CD14-positive monocyte (primary cell): ENCODE measurements at regions of chr10 and their contacts with region 1.

Region 1: DNA sequence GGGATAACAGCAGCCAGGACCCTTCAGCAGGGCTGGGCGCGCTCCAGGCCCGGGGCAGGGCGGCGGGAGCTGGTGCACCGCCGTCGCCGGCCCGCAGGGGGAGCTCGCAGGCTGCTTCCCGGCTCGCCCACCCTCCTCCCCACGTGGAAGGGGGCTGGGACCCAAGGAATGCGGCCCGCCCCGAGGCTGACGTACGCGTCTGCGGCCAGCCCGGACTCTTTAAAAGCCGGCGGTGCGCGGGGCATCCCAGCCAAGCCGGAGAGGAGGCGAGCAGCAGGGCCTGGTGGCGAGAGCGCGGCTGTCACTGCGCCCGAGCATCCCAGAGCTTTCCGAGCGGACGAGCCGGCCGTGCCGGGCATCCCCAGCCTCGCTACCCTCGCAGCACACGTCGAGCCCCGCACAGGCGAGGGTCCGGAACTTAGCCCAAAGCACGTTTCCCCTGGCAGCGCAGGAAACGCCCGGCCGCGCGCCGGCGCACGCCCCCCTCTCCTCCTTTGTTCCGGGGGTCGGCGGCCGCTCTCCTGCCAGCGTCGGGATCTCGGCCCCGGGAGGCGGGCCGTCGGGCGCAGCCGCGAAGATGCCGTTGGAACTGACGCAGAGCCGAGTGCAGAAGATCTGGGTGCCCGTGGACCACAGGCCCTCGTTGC is at the start of gene PFKFB3:
- DNase-seq: peak; percentile 92 to 96 (median 94)
- H3K4me3 ChIP-seq: peak within 1 kb of the TSS; percentile 82 to 97 (median 93)
- H3K4me3 Mint-ChIP-seq: peak within 1 kb of the TSS; percentile 99
- H3K27ac ChIP-seq: peak within 1 kb of the TSS; percentile 31 to 85
- H3K27ac Mint-ChIP-seq: peak within 1 kb of the TSS; percentile 79 to 92 (median 85)
- H3K4me1 ChIP-seq: peaks cover 52 to 60% of the 10 kb centered on the region in 2 donors
- H3K4me1 Mint-ChIP-seq: peaks cover 55% of the 10 kb centered on the region
- H3K27me3 ChIP-seq: peaks cover 0 to 9% of the 10 kb centered on the region in 2 donors
- H3K27me3 Mint-ChIP-seq: peaks cover 8 to 25% (median 24%) of the 10 kb centered on the region in 3 donors
- CTCF ChIP-seq: peak; percentile 97
- polyA plus RNA-seq, gene PFKFB3: 12.2 to 101 (median 15.8) TPM

Region 2: DNA sequence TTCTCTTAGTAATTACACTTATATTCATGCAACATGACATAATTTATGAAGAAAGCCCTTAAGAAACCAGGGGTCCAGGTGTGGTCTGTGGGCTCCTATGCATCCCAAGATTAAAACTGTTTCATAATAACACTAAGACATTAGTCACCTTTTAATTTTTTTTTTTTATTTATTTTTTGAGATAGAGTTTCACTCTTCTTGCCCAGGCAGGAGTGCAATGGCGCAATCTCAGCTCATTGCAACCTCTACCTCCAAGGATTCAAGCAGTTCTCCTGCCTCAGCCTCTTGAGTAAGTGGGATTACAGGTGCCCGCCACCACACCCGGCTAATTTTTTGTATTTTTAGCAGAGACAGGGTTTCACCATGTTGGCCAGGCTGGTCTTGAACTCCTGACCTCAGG is 402.0 kb before region 1 on chr10:
- intact Hi-C with region 1: no loop called
- DNase-seq: no peak
- H3K4me3 ChIP-seq: no peak overlapping the region
- H3K4me3 Mint-ChIP-seq: no peak overlapping the region
- H3K27ac ChIP-seq: peak overlapping the region in 1 of 2 donors; percentile 45
- H3K27ac Mint-ChIP-seq: peak overlapping the region in 1 of 7 donors; percentile 78
- H3K4me1 ChIP-seq: peaks cover 3 to 6% of the 10 kb centered on the region in 2 donors
- H3K4me1 Mint-ChIP-seq: peaks cover 20% of the 10 kb centered on the region
- H3K27me3 ChIP-seq: no peaks in the 10 kb centered on the region
- H3K27me3 Mint-ChIP-seq: peaks cover 0 to 2% (median 0%) of the 10 kb centered on the region in 3 donors
- CTCF ChIP-seq: no peak

Region 3: GRCh38 chr10:6089391-6090219 is 113.2 kb before region 1 on chr10:
- intact Hi-C with region 1: loop called in 1 of 2 experiments (anchors 5 kb)
- DNase-seq: peak in 1 of 3 donors; percentile 29
- H3K4me3 ChIP-seq: peak overlapping the region; percentile 58 to 97 (median 69)
- H3K4me3 Mint-ChIP-seq: peak overlapping the region; percentile 96 to 98
- H3K27ac ChIP-seq: peak overlapping the region; percentile 27 to 80
- H3K27ac Mint-ChIP-seq: peak overlapping the region; percentile 81 to 96 (median 89)
- H3K4me1 ChIP-seq: peaks cover 54 to 58% of the 10 kb centered on the region in 2 donors
- H3K4me1 Mint-ChIP-seq: peaks cover 56% of the 10 kb centered on the region
- H3K27me3 ChIP-seq: no peaks in the 10 kb centered on the region
- H3K27me3 Mint-ChIP-seq: peaks cover 0 to 6% (median 3%) of the 10 kb centered on the region in 3 donors
- CTCF ChIP-seq: no peak

Region 4: DNA sequence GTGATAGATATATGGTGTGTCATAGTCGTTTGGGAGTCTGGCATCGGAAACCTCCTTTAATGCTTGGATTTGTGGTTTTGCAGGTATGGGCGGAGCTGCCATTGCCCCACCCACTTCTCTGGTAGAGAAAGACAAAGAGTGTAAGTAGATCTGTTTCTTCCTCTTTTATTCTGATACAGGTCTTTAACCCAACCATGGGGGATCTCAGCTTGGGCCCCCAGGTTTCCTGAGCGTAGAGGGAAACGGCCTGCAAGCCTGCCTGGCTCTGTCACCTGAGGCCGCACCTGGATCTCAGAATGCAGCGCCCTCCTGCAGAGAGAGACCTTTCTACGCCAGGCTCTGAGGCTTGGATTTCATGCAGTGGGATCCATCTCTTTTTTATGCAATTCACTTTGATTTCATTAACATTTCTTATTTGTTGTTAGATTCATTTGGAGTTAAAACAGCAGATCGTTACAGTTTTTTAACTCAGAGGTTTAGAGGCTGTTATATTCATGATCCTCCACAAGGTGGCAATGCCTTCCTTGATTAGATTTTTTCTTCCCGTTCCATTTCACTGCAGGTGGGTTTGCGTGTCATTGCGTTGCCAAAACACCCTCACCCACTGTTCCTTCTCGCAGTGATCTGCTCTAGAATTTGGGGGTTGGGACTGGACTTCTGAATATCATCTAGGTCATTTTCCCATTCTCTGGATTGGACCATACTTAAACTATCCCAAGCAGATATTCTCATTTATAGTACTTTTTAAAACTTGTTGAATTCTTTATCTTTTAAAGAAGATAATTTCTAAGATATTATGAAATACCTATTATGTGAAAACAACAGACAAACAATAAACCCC is 94.0 kb before region 1 on chr10:
- intact Hi-C with region 1: loop called (anchors 2 to 5 kb)
- DNase-seq: peak; percentile 33 to 72 (median 68)
- H3K4me3 ChIP-seq: no peak overlapping the region
- H3K4me3 Mint-ChIP-seq: no peak overlapping the region
- H3K27ac ChIP-seq: no peak overlapping the region
- H3K27ac Mint-ChIP-seq: peak overlapping the region in 3 of 7 donors; percentile 3 to 64 (median 51)
- H3K4me1 ChIP-seq: peaks cover 0 to 4% of the 10 kb centered on the region in 2 donors
- H3K4me1 Mint-ChIP-seq: peaks cover 5% of the 10 kb centered on the region
- H3K27me3 ChIP-seq: no peaks in the 10 kb centered on the region
- H3K27me3 Mint-ChIP-seq: no peaks in the 10 kb centered on the region
- CTCF ChIP-seq: peak; percentile 89

Region 5: GRCh38 chr10:6163364-6164270 is 39.2 kb before region 1 on chr10:
- intact Hi-C with region 1: loop called (anchors 5 kb)
- DNase-seq: peak; percentile 85 to 88 (median 88)
- H3K4me3 ChIP-seq: peak overlapping the region; percentile 67 to 76 (median 69)
- H3K4me3 Mint-ChIP-seq: peak overlapping the region; percentile 95 to 99
- H3K27ac ChIP-seq: peak overlapping the region; percentile 85 to 92
- H3K27ac Mint-ChIP-seq: peak overlapping the region; percentile 93 to 99 (median 99)
- H3K4me1 ChIP-seq: peaks cover 19 to 26% of the 10 kb centered on the region in 2 donors
- H3K4me1 Mint-ChIP-seq: peaks cover 37% of the 10 kb centered on the region
- H3K27me3 ChIP-seq: no peaks in the 10 kb centered on the region
- H3K27me3 Mint-ChIP-seq: no peaks in the 10 kb centered on the region
- CTCF ChIP-seq: no peak

Region 6: DNA sequence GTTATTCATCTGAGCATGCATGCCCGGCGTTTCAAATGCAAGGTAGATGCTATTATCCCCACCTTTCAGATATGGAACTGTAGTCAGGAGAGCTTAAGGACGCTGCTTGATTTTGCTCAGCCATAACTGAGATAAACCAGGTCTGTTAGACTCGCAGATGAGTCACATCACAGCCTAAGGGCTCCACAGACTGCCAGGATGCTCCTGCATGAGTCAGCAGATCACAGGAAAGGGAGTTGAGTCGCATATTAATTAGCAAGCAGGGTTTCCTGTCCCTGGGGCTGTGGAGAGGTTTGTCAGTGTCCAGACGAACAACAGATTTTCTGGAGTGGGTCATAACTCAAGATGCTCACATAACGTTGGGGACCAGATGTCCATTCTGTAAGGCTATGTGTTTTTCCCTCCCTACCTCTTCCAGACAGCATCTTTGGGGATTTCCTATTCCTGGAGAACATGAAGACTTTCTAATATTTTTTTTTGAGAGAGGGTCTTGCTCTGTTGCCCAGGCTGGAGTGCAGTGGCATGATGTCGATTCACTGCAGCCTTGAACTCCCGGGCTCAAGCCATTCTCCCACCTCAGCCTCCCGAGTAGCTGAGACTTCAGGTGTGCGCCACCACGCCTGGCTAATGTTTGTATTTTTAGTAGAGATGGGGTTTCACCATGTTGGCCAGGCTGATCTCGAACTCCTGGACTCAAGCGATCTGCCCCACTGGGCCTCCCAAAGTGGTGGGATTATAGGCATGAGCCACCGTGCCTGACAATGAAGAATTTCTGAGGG is 36.6 kb after region 1 on chr10:
- intact Hi-C with region 1: no loop called
- DNase-seq: peak; percentile 91 to 97 (median 92)
- H3K4me3 ChIP-seq: no peak overlapping the region
- H3K4me3 Mint-ChIP-seq: peak overlapping the region in 1 of 2 donors; percentile 28
- H3K27ac ChIP-seq: peak overlapping the region in 1 of 2 donors; percentile 62
- H3K27ac Mint-ChIP-seq: peak overlapping the region; percentile 25 to 88 (median 82)
- H3K4me1 ChIP-seq: peaks cover 17 to 25% of the 10 kb centered on the region in 2 donors
- H3K4me1 Mint-ChIP-seq: peaks cover 24% of the 10 kb centered on the region
- H3K27me3 ChIP-seq: no peaks in the 10 kb centered on the region
- H3K27me3 Mint-ChIP-seq: peaks cover 0 to 2% (median 1%) of the 10 kb centered on the region in 3 donors
- CTCF ChIP-seq: no peak

Region 7: DNA sequence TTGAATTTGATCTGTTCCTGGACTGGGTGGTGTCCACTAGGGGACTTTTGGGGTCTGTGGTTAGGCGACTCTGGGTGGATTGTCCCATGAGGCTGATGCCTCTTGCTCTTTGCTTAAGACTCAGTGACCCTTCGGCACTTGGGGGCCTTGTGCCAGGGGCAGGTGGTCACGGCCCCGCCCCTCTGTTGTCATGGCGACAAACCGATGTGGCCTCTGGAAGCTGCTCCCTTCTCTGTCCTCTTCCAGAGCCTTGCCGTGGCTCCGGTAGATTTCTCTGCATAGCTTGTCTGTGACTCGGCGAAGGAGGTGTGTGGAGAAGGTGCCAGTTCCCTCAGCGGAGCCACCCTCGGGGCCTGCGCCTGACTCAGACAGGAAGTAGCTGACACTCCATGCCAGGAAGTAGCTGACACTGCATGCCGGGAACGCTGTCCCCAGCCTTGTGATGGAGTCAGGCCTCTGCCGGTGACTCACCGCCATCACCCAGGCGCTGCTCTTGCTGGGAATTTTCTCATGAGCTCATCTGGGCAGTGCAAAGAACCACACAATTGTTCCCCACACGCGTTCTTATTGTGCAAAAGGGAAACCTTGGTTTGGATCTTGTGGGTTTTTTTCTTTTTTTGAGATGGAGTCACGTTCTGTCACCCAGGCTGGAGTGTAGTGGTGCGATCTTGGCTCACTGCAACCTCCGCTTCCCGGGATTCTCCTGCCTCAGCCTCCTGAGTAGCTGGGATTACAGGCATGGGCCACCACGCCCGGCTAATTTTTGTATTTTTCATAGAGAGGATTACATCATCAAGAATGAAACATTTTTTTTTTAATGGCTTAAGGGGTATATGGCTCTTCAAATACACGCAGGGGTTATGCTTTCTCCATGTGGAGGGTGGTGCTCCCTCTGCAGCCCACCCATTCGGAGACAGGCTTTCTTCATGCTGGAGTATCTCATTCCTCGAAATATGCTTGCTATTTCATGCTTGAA is 72.5 kb after region 1 on chr10:
- intact Hi-C with region 1: no loop called
- DNase-seq: peak; percentile 100
- H3K4me3 ChIP-seq: peak overlapping the region in 2 of 3 experiments; percentile 15 to 24
- H3K4me3 Mint-ChIP-seq: peak overlapping the region; percentile 67 to 83
- H3K27ac ChIP-seq: peak overlapping the region; percentile 96 to 98
- H3K27ac Mint-ChIP-seq: peak overlapping the region; percentile 97 to 100 (median 99)
- H3K4me1 ChIP-seq: peaks cover 27 to 33% of the 10 kb centered on the region in 2 donors
- H3K4me1 Mint-ChIP-seq: peaks cover 49% of the 10 kb centered on the region
- H3K27me3 ChIP-seq: no peaks in the 10 kb centered on the region
- H3K27me3 Mint-ChIP-seq: peaks cover 1 to 17% (median 4%) of the 10 kb centered on the region in 3 donors
- CTCF ChIP-seq: no peak

Region 8: GRCh38 chr10:6348096-6348874 is 145.5 kb after region 1 on chr10:
- intact Hi-C with region 1: loop called in 1 of 2 experiments (anchors 10 kb)
- DNase-seq: peak; percentile 93 to 98 (median 94)
- H3K4me3 ChIP-seq: peak overlapping the region in 1 of 3 experiments; percentile 38
- H3K4me3 Mint-ChIP-seq: peak overlapping the region; percentile 61 to 84
- H3K27ac ChIP-seq: peak overlapping the region; percentile 51 to 83
- H3K27ac Mint-ChIP-seq: peak overlapping the region; percentile 91 to 95 (median 93)
- H3K4me1 ChIP-seq: peaks cover 26 to 31% of the 10 kb centered on the region in 2 donors
- H3K4me1 Mint-ChIP-seq: peaks cover 41% of the 10 kb centered on the region
- H3K27me3 ChIP-seq: no peaks in the 10 kb centered on the region
- H3K27me3 Mint-ChIP-seq: peaks cover 0 to 7% (median 1%) of the 10 kb centered on the region in 3 donors
- CTCF ChIP-seq: no peak